ENCODE measurements at regions of chr6 and their contacts with region 1.

Region 1: DNA sequence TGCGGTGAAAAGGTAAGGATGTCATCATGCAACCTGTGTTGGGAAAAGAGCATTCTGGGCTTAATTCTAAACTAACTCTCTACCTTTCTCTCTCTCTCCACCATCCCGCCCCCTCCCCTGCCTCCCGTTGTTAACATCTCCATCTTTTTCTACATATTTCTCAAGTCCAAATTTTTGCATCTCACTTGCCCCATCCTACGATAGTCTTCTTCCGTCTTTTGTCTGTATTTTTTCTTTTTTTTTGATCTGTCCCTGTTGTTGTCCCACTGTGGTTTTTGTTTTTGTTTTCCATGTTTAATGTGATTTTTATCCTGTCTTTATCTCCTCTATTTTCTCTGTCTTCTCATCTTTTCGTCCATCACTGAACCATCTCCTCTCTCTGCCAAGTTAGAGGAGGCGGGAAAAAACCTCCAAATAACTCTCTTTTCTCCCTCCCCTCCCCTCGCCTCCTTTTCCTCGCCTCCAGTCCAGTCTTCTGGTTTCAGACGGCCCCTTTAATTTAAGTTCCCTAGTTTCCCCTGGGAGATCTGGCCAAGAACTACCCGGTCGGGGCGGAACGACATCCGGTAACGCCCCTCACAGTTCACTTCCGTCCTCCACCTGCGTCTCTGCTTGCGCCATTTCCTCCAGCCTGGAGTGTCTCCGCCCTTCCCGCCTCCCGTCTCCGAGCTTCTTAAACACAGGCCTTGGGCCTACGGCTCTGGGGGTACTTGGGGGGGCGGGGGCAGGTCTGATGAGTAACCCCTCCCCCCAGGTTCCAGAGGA is at the start of gene NFKBIL1:
- DNase-seq: peak; percentile 91 to 93
- H3K4me3 ChIP-seq: peak within 1 kb of the TSS; percentile 44
- H3K4me3 Mint-ChIP-seq: peak within 1 kb of the TSS; percentile 87
- H3K27ac Mint-ChIP-seq: peak within 1 kb of the TSS; percentile 64
- H3K4me1 ChIP-seq: peaks cover 6% of the 10 kb centered on the region
- H3K4me1 Mint-ChIP-seq: peaks cover 12% of the 10 kb centered on the region
- H3K27me3 ChIP-seq: no peaks in the 10 kb centered on the region
- H3K27me3 Mint-ChIP-seq: no peaks in the 10 kb centered on the region
- CTCF ChIP-seq: no peak
- total RNA-seq, gene NFKBIL1: 14.7 and 17.4 TPM in 2 replicates

Region 2: DNA sequence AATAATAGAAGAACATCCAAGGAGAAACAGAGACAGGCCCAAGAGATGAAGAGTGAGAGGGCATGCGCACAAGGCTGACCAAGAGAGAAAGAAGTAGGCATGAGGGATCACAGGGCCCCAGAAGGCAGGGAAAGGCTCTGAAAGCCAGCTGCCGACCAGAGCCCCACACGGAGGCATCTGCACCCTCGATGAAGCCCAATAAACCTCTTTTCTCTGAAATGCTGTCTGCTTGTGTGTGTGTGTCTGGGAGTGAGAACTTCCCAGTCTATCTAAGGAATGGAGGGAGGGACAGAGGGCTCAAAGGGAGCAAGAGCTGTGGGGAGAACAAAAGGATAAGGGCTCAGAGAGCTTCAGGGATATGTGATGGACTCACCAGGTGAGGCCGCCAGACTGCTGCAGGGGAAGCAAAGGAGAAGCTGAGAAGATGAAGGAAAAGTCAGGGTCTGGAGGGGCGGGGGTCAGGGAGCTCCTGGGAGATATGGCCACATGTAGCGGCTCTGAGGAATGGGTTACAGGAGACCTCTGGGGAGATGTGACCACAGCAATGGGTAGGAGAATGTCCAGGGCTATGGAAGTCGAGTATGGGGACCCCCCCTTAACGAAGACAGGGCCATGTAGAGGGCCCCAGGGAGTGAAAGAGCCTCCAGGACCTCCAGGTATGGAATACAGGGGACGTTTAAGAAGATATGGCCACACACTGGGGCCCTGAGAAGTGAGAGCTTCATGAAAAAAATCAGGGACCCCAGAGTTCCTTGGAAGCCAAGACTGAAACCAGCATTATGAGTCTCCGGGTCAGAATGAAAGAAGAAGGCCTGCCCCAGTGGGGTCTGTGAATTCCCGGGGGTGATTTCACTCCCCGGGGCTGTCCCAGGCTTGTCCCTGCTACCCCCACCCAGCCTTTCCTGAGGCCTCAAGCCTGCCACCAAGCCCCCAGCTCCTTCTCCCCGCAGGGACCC is 27.2 kb after region 1 on chr6:
- CTCF ChIA-PET with region 1: interaction called, 5 read pairs
- POLR2A ChIA-PET with region 1: interaction called, 3 read pairs
- intact Hi-C with region 1: loop called (anchors 1 kb)
- DNase-seq: no peak
- H3K4me3 ChIP-seq: no peak overlapping the region
- H3K4me3 Mint-ChIP-seq: no peak overlapping the region
- H3K27ac Mint-ChIP-seq: peak overlapping the region; percentile 53
- H3K4me1 ChIP-seq: peaks cover 10% of the 10 kb centered on the region
- H3K4me1 Mint-ChIP-seq: peaks cover 12% of the 10 kb centered on the region
- H3K27me3 ChIP-seq: no peaks in the 10 kb centered on the region
- H3K27me3 Mint-ChIP-seq: no peaks in the 10 kb centered on the region
- CTCF ChIP-seq: no peak

Region 3: DNA sequence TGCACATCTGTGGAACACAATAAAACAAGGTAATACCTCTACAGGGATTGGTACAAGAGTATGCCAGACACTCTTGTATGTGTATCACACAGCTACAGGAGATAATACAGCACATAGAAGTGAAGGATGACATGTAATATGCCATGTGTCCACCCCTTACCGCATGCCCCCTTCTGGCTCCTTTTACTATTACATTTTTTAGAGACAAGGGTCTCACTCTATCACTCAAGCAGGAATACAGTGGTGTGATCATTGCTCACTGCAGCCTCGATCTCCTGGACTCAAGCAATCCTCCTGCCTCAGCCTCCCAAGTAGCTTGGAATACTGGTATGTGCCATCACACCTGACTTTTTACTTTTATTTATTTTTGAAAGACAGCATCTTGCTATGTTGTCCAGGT is 49.9 kb after region 1 on chr6:
- CTCF ChIA-PET with region 1: interaction called, 41 read pairs
- POLR2A ChIA-PET with region 1: interaction called, 10 read pairs
- intact Hi-C with region 1: loop called (anchors 1 kb)
- DNase-seq: peak in 1 of 2 experiments; percentile 52
- H3K4me3 ChIP-seq: no peak overlapping the region
- H3K4me3 Mint-ChIP-seq: no peak overlapping the region
- H3K27ac Mint-ChIP-seq: no peak overlapping the region
- H3K4me1 ChIP-seq: no peaks in the 10 kb centered on the region
- H3K4me1 Mint-ChIP-seq: peaks cover 5% of the 10 kb centered on the region
- H3K27me3 ChIP-seq: no peaks in the 10 kb centered on the region
- H3K27me3 Mint-ChIP-seq: no peaks in the 10 kb centered on the region
- CTCF ChIP-seq: peak; percentile 34 to 38

Region 4: GRCh38 chr6:31652925-31653718 is 106.0 kb after region 1 on chr6:
- CTCF ChIA-PET with region 1: interaction called, 3 read pairs
- POLR2A ChIA-PET with region 1: no interaction called
- intact Hi-C with region 1: loop called (anchors 2 kb)
- DNase-seq: peak in 1 of 2 experiments; percentile 90
- H3K4me3 ChIP-seq: peak overlapping the region; percentile 97
- H3K4me3 Mint-ChIP-seq: peak overlapping the region; percentile 98
- H3K27ac Mint-ChIP-seq: peak overlapping the region; percentile 99
- H3K4me1 ChIP-seq: peaks cover 36% of the 10 kb centered on the region
- H3K4me1 Mint-ChIP-seq: peaks cover 26% of the 10 kb centered on the region
- H3K27me3 ChIP-seq: no peaks in the 10 kb centered on the region
- H3K27me3 Mint-ChIP-seq: no peaks in the 10 kb centered on the region
- CTCF ChIP-seq: peak in 1 of 2 experiments; percentile 16